Activated CD8-positive, alpha-beta T cell treated with anti-CD3 and anti-CD28 coated beads for 36 hours (primary cell): ENCODE measurements at regions of chr6 and their contacts with region 1.

Region 1: DNA sequence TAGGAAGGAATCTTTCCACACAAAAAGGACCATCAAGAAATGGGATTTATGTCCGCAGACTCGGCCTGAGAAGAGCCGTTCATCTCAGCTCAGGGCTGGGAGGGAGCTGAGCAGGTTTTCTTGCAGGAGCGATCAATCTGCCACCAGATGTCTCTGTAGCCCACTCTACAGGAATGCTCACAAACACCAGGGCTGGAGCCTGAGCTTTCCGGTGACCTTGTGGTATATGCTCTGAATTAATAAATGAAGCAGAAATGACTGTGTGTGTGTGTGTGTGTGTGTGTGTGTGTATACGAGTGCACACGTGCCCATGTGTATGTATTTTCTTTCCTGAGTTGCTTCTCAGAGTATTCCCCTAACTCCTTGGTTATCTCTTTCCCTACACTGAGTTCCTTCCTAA is 12.0 kb downstream of the CD83 start:
- DNase-seq: peak; percentile 47
- ATAC-seq: peak; percentile 74
- H3K4me3 Mint-ChIP-seq: no peak overlapping the region
- H3K27ac Mint-ChIP-seq: no peak overlapping the region
- H3K4me1 Mint-ChIP-seq: peaks cover 19% of the 10 kb centered on the region
- H3K27me3 Mint-ChIP-seq: no peaks in the 10 kb centered on the region
- CTCF ChIP-seq: no peak

Region 2: GRCh38 chr6:14118091-14118439 is 11.5 kb before region 1 on chr6:
- CTCF ChIA-PET with region 1: interaction called, 13 read pairs
- POLR2A ChIA-PET with region 1: interaction called, 4 read pairs
- intact Hi-C with region 1: no loop called
- DNase-seq: no peak
- ATAC-seq: peak; percentile 23
- H3K4me3 Mint-ChIP-seq: peak overlapping the region; percentile 99
- H3K27ac Mint-ChIP-seq: peak overlapping the region; percentile 87
- H3K4me1 Mint-ChIP-seq: peaks cover 38% of the 10 kb centered on the region
- H3K27me3 Mint-ChIP-seq: no peaks in the 10 kb centered on the region
- CTCF ChIP-seq: no peak

Region 3: GRCh38 chr6:14144678-14145113 is 15.1 kb after region 1 on chr6:
- CTCF ChIA-PET with region 1: interaction called, 20 read pairs
- POLR2A ChIA-PET with region 1: interaction called, 4 read pairs
- intact Hi-C with region 1: no loop called
- DNase-seq: peak; percentile 74
- ATAC-seq: peak; percentile 99
- H3K4me3 Mint-ChIP-seq: no peak overlapping the region
- H3K27ac Mint-ChIP-seq: no peak overlapping the region
- H3K4me1 Mint-ChIP-seq: peaks cover 4% of the 10 kb centered on the region
- H3K27me3 Mint-ChIP-seq: no peaks in the 10 kb centered on the region
- CTCF ChIP-seq: peak; percentile 94